CD4-positive, alpha-beta T cell (primary cell): ENCODE measurements at regions of chr18 and their contacts with region 1.

Region 1: GRCh38 chr18:23619388-23619881 is 33.1 kb upstream of the NPC1 start:
- DNase-seq: peak in 5 of 14 experiments; percentile 0 to 36 (median 5)
- ATAC-seq: peak; percentile 37
- H3K4me3 ChIP-seq: peak overlapping the region; percentile 39
- H3K4me3 Mint-ChIP-seq: peak overlapping the region; percentile 48
- H3K27ac ChIP-seq: no peak overlapping the region
- H3K27ac Mint-ChIP-seq: no peak overlapping the region
- H3K4me1 ChIP-seq: peaks cover 12% of the 10 kb centered on the region
- H3K4me1 Mint-ChIP-seq: peaks cover 6% of the 10 kb centered on the region
- H3K27me3 ChIP-seq: peaks cover 26 to 30% of the 10 kb centered on the region in 2 experiments
- H3K27me3 Mint-ChIP-seq: peaks cover 52% of the 10 kb centered on the region
- CTCF ChIP-seq: no peak

Region 2: DNA sequence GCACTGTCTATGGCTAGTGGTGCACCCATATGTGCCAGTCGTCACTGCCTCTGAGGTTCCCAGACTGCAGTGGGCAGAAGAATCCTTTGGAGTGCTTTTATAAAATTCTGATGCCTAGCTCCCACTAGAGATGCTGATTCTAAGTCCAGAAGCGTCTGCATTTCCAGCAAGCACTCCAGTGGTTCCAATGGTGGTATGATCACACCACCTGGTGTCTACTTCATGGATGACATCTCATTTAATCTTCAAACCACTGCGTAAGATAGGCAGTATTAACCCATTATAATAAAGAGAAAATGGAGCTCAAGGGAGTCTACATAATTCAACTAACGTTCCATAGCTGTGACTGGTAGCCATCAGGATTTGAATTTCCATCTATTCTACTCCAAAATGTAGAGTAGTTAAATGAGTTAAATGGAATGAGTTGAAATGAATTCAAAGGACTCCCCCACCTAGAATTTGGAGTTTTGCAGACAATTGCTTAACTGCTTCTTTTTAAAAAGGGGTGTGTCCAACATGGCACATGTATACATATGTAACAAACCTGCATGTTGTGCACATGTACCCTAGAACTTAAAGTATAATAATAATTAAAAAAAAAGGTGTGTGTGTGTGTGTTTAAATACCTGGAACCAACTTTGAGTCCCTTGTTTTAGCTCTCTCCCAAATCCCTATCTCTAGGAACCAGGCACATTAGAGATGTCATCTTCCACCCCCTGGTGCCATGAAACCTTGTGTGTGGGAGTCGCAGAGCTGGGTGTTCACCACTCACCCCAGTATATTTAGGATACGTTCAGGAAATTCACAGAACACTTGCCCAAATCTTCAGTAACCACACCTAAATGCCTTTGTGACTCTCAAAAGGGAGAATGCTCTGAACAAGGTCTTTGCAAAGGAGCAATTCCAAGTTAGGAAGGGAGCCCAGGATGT is 83.9 kb after region 1 on chr18:
- CTCF ChIA-PET with region 1: interaction called, 20 read pairs
- POLR2A ChIA-PET with region 1: no interaction called
- intact Hi-C with region 1: loop called (anchors 1 kb)
- DNase-seq: peak in 5 of 14 experiments; percentile 12 to 72 (median 61)
- ATAC-seq: peak; percentile 88
- H3K4me3 ChIP-seq: no peak overlapping the region
- H3K4me3 Mint-ChIP-seq: no peak overlapping the region
- H3K27ac ChIP-seq: no peak overlapping the region
- H3K27ac Mint-ChIP-seq: no peak overlapping the region
- H3K4me1 ChIP-seq: no peaks in the 10 kb centered on the region
- H3K4me1 Mint-ChIP-seq: no peaks in the 10 kb centered on the region
- H3K27me3 ChIP-seq: peaks cover 6 to 14% of the 10 kb centered on the region in 2 experiments
- H3K27me3 Mint-ChIP-seq: peaks cover 32% of the 10 kb centered on the region
- CTCF ChIP-seq: peak; percentile 56

Region 3: GRCh38 chr18:23812546-23813440 is 193.4 kb after region 1 on chr18:
- CTCF ChIA-PET with region 1: interaction called, 3 read pairs
- POLR2A ChIA-PET with region 1: interaction called, 3 read pairs
- intact Hi-C with region 1: loop called (anchors 1 kb)
- DNase-seq: peak in 3 of 14 experiments; percentile 47 to 57 (median 49)
- ATAC-seq: peak; percentile 49
- H3K4me3 ChIP-seq: no peak overlapping the region
- H3K4me3 Mint-ChIP-seq: no peak overlapping the region
- H3K27ac ChIP-seq: no peak overlapping the region
- H3K27ac Mint-ChIP-seq: no peak overlapping the region
- H3K4me1 ChIP-seq: peaks cover 9% of the 10 kb centered on the region
- H3K4me1 Mint-ChIP-seq: peaks cover 11% of the 10 kb centered on the region
- H3K27me3 ChIP-seq: no peaks in the 10 kb centered on the region
- H3K27me3 Mint-ChIP-seq: no peaks in the 10 kb centered on the region
- CTCF ChIP-seq: peak; percentile 63

Region 4: GRCh38 chr18:24002483-24002882 is 383.0 kb after region 1 on chr18:
- CTCF ChIA-PET with region 1: no interaction called
- POLR2A ChIA-PET with region 1: no interaction called
- intact Hi-C with region 1: loop called in 1 of 2 experiments (anchors 2 kb)
- DNase-seq: peak in 2 of 14 experiments; percentile 50 to 54
- ATAC-seq: no peak
- H3K4me3 ChIP-seq: no peak overlapping the region
- H3K4me3 Mint-ChIP-seq: peak overlapping the region; percentile 37
- H3K27ac ChIP-seq: peak overlapping the region in 1 of 2 donors; percentile 70
- H3K27ac Mint-ChIP-seq: peak overlapping the region; percentile 77
- H3K4me1 ChIP-seq: peaks cover 94% of the 10 kb centered on the region
- H3K4me1 Mint-ChIP-seq: peaks cover 70% of the 10 kb centered on the region
- H3K27me3 ChIP-seq: no peaks in the 10 kb centered on the region
- H3K27me3 Mint-ChIP-seq: no peaks in the 10 kb centered on the region
- CTCF ChIP-seq: no peak